Gastrocnemius medialis (tissue), 4 donors: ENCODE measurements at regions of chr12 and their contacts with region 1.

Region 1: GRCh38 chr12:57904848-57905811 is 36.2 kb upstream of the ATP23 start:
- DNase-seq: peak; percentile 80 to 84
- ATAC-seq: peak; percentile 94 to 98
- H3K4me3 ChIP-seq: peak overlapping the region; percentile 39 to 42 (median 40)
- H3K27ac ChIP-seq: peak overlapping the region; percentile 73 to 77 (median 76)
- H3K4me1 ChIP-seq: peaks cover 5% of the 10 kb centered on the region in 2 donors
- H3K27me3 ChIP-seq: no peaks in the 10 kb centered on the region
- CTCF ChIP-seq: peak; percentile 100
- POLR2A ChIP-seq: no peak

Region 2: GRCh38 chr12:57583008-57583831 is 321.9 kb before region 1 on chr12:
- in situ Hi-C with region 1: no loop called
- intact Hi-C with region 1: loop called (anchors 10 kb)
- DNase-seq: peak; percentile 39 to 48
- ATAC-seq: peak; percentile 92 to 99
- H3K4me3 ChIP-seq: no peak overlapping the region
- H3K27ac ChIP-seq: no peak overlapping the region
- H3K4me1 ChIP-seq: no peaks in the 10 kb centered on the region
- H3K27me3 ChIP-seq: no peaks in the 10 kb centered on the region
- CTCF ChIP-seq: peak; percentile 83 to 91 (median 86)
- POLR2A ChIP-seq: no peak

Region 3: GRCh38 chr12:57782608-57783465 is 122.3 kb before region 1 on chr12 and contains the start of gene TSFM:
- in situ Hi-C with region 1: loop called in 1 of 4 experiments (anchors 5 kb)
- intact Hi-C with region 1: loop called (anchors 1 kb)
- DNase-seq: peak; percentile 93 to 94
- ATAC-seq: peak; percentile 96
- H3K4me3 ChIP-seq: peak within 1 kb of the TSS; percentile 89 to 98 (median 94)
- H3K27ac ChIP-seq: peak within 1 kb of the TSS; percentile 80 to 89 (median 85)
- H3K4me1 ChIP-seq: peaks cover 9 to 15% of the 10 kb centered on the region in 2 donors
- H3K27me3 ChIP-seq: no peaks in the 10 kb centered on the region
- CTCF ChIP-seq: peak; percentile 95 to 99 (median 97)
- POLR2A ChIP-seq: peak; percentile 56 to 75
- total RNA-seq, gene TSFM: 37.6 to 47.5 (median 40.1) TPM

Region 4: GRCh38 chr12:57803319-57803893 is 101.7 kb before region 1 on chr12:
- in situ Hi-C with region 1: loop called in 1 of 4 experiments (anchors 10 kb)
- intact Hi-C with region 1: loop called (anchors 1 kb)
- DNase-seq: no peak
- ATAC-seq: peak in 1 of 2 donors; percentile 74
- H3K4me3 ChIP-seq: no peak overlapping the region
- H3K27ac ChIP-seq: peak overlapping the region in 3 of 4 donors; percentile 5 to 32 (median 9)
- H3K4me1 ChIP-seq: peaks cover 0 to 4% of the 10 kb centered on the region in 2 donors
- H3K27me3 ChIP-seq: no peaks in the 10 kb centered on the region
- CTCF ChIP-seq: peak; percentile 61 to 76 (median 74)
- POLR2A ChIP-seq: no peak

Region 5: GRCh38 chr12:57829025-57829777 is 75.9 kb before region 1 on chr12:
- in situ Hi-C with region 1: loop called (anchors 5 kb)
- intact Hi-C with region 1: loop called (anchors 1 kb)
- DNase-seq: no peak
- ATAC-seq: no peak
- H3K4me3 ChIP-seq: no peak overlapping the region
- H3K27ac ChIP-seq: peak overlapping the region; percentile 93 to 99 (median 98)
- H3K4me1 ChIP-seq: peaks cover 52 to 59% of the 10 kb centered on the region in 2 donors
- H3K27me3 ChIP-seq: no peaks in the 10 kb centered on the region
- CTCF ChIP-seq: no peak
- POLR2A ChIP-seq: no peak

Region 6: GRCh38 chr12:57836442-57837375 is 68.4 kb before region 1 on chr12:
- in situ Hi-C with region 1: loop called in 1 of 4 experiments (anchors 5 kb)
- intact Hi-C with region 1: loop called (anchors 1 kb)
- DNase-seq: peak in 1 of 2 donors; percentile 58
- ATAC-seq: peak; percentile 13 to 14
- H3K4me3 ChIP-seq: peak overlapping the region; percentile 21 to 34 (median 24)
- H3K27ac ChIP-seq: peak overlapping the region; percentile 93 to 99 (median 98)
- H3K4me1 ChIP-seq: peaks cover 98 to 100% of the 10 kb centered on the region in 2 donors
- H3K27me3 ChIP-seq: no peaks in the 10 kb centered on the region
- CTCF ChIP-seq: no peak
- POLR2A ChIP-seq: no peak